ENCODE measurements at regions of chr6 and their contacts with region 1.

Region 1: GRCh38 chr6:53348371-53349208 is at the start of gene ELOVL5:
- DNase-seq: peak; percentile 97 to 99
- ATAC-seq: peak; percentile 93 to 97 (median 94)
- H3K4me3 ChIP-seq: peak within 1 kb of the TSS; percentile 82 to 98 (median 93)
- H3K27ac ChIP-seq: peak within 1 kb of the TSS; percentile 90 to 100 (median 99)
- H3K4me1 ChIP-seq: peaks cover 0 to 40% (median 25%) of the 10 kb centered on the region in 9 donors
- H3K27me3 ChIP-seq: no peaks in the 10 kb centered on the region
- CTCF ChIP-seq: peak in 1 of 9 donors; percentile 14
- total RNA-seq, gene ELOVL5: 16.9 to 48.1 (median 29.7) TPM

Region 2: GRCh38 chr6:53294095-53294494 is 54.5 kb before region 1 on chr6:
- intact Hi-C with region 1: loop called in 4 of 10 experiments (anchors 5 to 10 kb)
- DNase-seq: no peak
- ATAC-seq: peak in 3 of 8 donors; percentile 31 to 56 (median 45)
- H3K4me3 ChIP-seq: no peak overlapping the region
- H3K27ac ChIP-seq: peak overlapping the region in 1 of 10 donors; percentile 5
- H3K4me1 ChIP-seq: peaks cover 0 to 68% (median 43%) of the 10 kb centered on the region in 9 donors
- H3K27me3 ChIP-seq: no peaks in the 10 kb centered on the region
- CTCF ChIP-seq: peak; percentile 22 to 68 (median 56)

Region 3: GRCh38 chr6:53300656-53301551 is 47.7 kb before region 1 on chr6:
- intact Hi-C with region 1: loop called in 9 of 10 experiments (anchors 2 to 10 kb)
- DNase-seq: peak; percentile 23 to 56
- ATAC-seq: peak; percentile 78 to 90 (median 85)
- H3K4me3 ChIP-seq: peak overlapping the region in 2 of 10 donors; percentile 1 to 9
- H3K27ac ChIP-seq: peak overlapping the region; percentile 42 to 90 (median 82)
- H3K4me1 ChIP-seq: peaks cover 11 to 83% (median 70%) of the 10 kb centered on the region in 9 donors
- H3K27me3 ChIP-seq: no peaks in the 10 kb centered on the region
- CTCF ChIP-seq: no peak

Region 4: GRCh38 chr6:53309059-53309900 is 39.3 kb before region 1 on chr6:
- intact Hi-C with region 1: loop called in 4 of 10 experiments (anchors 5 kb)
- DNase-seq: no peak
- ATAC-seq: peak in 5 of 8 donors; percentile 36 to 63 (median 48)
- H3K4me3 ChIP-seq: no peak overlapping the region
- H3K27ac ChIP-seq: peak overlapping the region in 2 of 10 donors; percentile 31 to 35
- H3K4me1 ChIP-seq: peaks cover 0 to 78% (median 46%) of the 10 kb centered on the region in 9 donors
- H3K27me3 ChIP-seq: no peaks in the 10 kb centered on the region
- CTCF ChIP-seq: no peak

Measured in heart right ventricle (tissue), 16 donors.